GM12878 (cell line): ENCODE measurements at regions of chr13 and their contacts with region 1.

Region 1: GRCh38 chr13:33110713-33111413 is 94.6 kb downstream of the KL start:
- DNase-seq: no peak
- ATAC-seq: peak; percentile 63
- H3K4me3 ChIP-seq: no peak overlapping the region
- H3K27ac ChIP-seq: peak overlapping the region; percentile 91
- H3K4me1 ChIP-seq: peaks cover 54% of the 10 kb centered on the region
- H3K27me3 ChIP-seq: no peaks in the 10 kb centered on the region
- CTCF ChIP-seq: no peak
- EP300 ChIP-seq: peak; percentile 30 to 35; a peak in 2 of 4 replicates
- POLR2A ChIP-seq: 0 out of 2 replicates have a peak, but pooled peaks have one; percentile 17
- RAD21 ChIP-seq: peak; percentile 24; the same call in 1 of the 2 replicates

Region 2: DNA sequence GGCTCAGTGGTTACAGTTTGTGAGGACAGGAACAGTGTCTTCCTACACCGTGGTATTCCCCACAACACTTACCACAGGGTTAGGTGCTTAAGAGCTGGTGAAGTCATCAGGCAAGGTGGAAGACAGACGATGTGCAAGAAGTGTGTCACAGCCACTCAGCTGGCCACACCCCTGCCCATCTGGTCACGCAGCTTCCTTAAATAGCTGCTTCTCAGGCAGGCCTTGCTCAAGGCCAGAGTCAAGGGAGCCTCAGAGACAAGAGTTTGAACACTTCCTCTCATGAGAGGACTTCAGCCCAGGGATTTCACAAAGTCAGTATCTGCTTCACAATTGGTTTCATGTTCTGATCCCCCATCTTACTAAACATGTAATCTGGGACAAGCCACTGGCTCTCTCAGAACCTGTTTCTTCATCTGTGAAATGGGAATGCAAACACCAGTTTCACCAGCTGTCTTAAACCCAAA is 1159.6 kb before region 1 on chr13:
- CTCF ChIA-PET with region 1: no interaction called
- POLR2A ChIA-PET with region 1: no interaction called
- RAD21 ChIA-PET with region 1: no interaction called
- SMC1A ChIA-PET with region 1: no interaction called
- in situ Hi-C with region 1: no loop called
- intact Hi-C with region 1: no loop called
- DNase-seq: peak; percentile 89
- ATAC-seq: peak; percentile 96
- H3K4me3 ChIP-seq: no peak overlapping the region; the same call in 1 of the 2 replicates
- H3K27ac ChIP-seq: peak overlapping the region; percentile 63
- H3K4me1 ChIP-seq: peaks cover 22% of the 10 kb centered on the region
- H3K27me3 ChIP-seq: no peaks in the 10 kb centered on the region
- CTCF ChIP-seq: no peak
- EP300 ChIP-seq: peak; percentile 92 to 93; a peak in 2 of 4 replicates
- POLR2A ChIP-seq: peak; percentile 63
- RAD21 ChIP-seq: no peak

Region 3: GRCh38 chr13:32811297-32811800 is 299.5 kb before region 1 on chr13:
- CTCF ChIA-PET with region 1: no interaction called
- POLR2A ChIA-PET with region 1: no interaction called
- RAD21 ChIA-PET with region 1: no interaction called
- SMC1A ChIA-PET with region 1: no interaction called
- in situ Hi-C with region 1: no loop called
- intact Hi-C with region 1: no loop called
- DNase-seq: peak; percentile 62
- ATAC-seq: peak; percentile 95
- H3K4me3 ChIP-seq: no peak overlapping the region
- H3K27ac ChIP-seq: peak overlapping the region; percentile 62
- H3K4me1 ChIP-seq: peaks cover 14% of the 10 kb centered on the region
- H3K27me3 ChIP-seq: no peaks in the 10 kb centered on the region
- CTCF ChIP-seq: no peak
- EP300 ChIP-seq: peak in 1 of 2 experiments; percentile 43; a peak in 1 of 4 replicates
- POLR2A ChIP-seq: peak; percentile 61
- RAD21 ChIP-seq: no peak

Region 4: DNA sequence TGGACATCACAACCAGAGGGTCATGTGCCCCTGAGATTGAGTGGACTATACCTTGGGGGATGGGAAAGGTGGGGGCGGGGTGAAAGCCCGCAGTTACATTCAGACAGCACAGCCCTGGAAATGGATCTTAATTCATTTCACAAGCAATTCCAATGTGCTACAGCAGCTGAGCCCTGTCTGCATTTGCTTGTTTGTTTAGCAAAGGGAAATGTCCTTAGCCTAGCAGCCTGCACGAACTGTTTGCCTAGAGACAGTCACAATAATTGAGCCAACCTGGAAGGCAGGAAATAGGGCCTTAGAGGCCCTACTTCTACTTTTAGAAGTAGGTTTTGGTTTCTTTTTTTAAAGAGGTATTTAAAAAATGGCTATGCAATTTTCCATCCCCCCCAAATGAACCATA is 271.9 kb before region 1 on chr13:
- CTCF ChIA-PET with region 1: no interaction called
- POLR2A ChIA-PET with region 1: no interaction called
- RAD21 ChIA-PET with region 1: no interaction called
- SMC1A ChIA-PET with region 1: no interaction called
- in situ Hi-C with region 1: no loop called
- intact Hi-C with region 1: loop called (anchors 10 kb)
- DNase-seq: no peak
- ATAC-seq: peak; percentile 83
- H3K4me3 ChIP-seq: peak overlapping the region; percentile 14; the same call in 1 of the 2 replicates
- H3K27ac ChIP-seq: peak overlapping the region; percentile 84
- H3K4me1 ChIP-seq: peaks cover 40% of the 10 kb centered on the region
- H3K27me3 ChIP-seq: no peaks in the 10 kb centered on the region
- CTCF ChIP-seq: no peak
- EP300 ChIP-seq: peak; percentile 40 to 71; a peak in 1 of 4 replicates
- POLR2A ChIP-seq: no peak
- RAD21 ChIP-seq: 0 out of 2 replicates have a peak, but pooled peaks have one; percentile 8

Region 5: DNA sequence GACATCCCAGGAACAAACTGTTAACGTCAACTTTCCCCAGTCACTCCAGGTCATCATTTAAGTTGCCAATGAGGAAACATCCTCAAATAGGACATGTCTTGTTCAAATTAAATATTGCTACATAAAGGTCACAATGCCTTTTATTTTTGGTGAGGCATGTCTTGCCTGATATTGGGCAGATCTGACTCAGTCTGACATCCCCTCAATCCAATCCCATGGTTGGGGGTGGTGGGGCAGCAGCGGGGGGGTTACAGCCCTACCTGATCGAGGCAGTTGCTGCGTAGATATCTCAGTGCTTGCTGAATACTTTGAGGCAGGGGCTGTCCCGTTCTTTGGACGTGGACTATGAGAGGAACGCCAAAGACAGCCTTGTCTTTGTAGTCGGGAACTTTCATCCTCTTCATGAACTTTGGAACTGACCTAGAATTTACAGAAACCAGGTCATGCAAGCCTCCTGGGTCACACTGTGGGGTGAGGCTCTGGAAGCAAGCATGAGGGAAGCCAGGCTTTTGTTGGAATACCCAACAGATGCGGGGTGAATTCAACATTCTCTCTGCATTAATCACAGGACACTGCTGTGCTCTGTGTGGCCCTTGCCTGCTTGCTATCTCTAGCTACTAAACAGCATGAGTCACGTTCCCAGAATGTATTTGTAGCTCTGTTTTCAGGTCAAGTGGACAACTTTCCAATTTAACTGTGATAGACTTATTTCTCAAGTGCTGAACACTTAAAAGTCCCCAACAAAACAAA is 15.1 kb after region 1 on chr13:
- CTCF ChIA-PET with region 1: interaction called, 35 read pairs
- POLR2A ChIA-PET with region 1: interaction called, 10 read pairs
- RAD21 ChIA-PET with region 1: interaction called, 6 read pairs
- SMC1A ChIA-PET with region 1: interaction called, 35 read pairs
- in situ Hi-C with region 1: no loop called
- intact Hi-C with region 1: no loop called
- DNase-seq: no peak
- ATAC-seq: no peak
- H3K4me3 ChIP-seq: no peak overlapping the region
- H3K27ac ChIP-seq: no peak overlapping the region
- H3K4me1 ChIP-seq: no peaks in the 10 kb centered on the region
- H3K27me3 ChIP-seq: no peaks in the 10 kb centered on the region
- CTCF ChIP-seq: no peak
- EP300 ChIP-seq: no peak
- POLR2A ChIP-seq: no peak
- RAD21 ChIP-seq: no peak

Region 6: GRCh38 chr13:33139184-33139583 is 28.3 kb after region 1 on chr13:
- CTCF ChIA-PET with region 1: interaction called, 35 read pairs
- POLR2A ChIA-PET with region 1: interaction called, 62 read pairs
- RAD21 ChIA-PET with region 1: interaction called, 80 read pairs
- SMC1A ChIA-PET with region 1: interaction called, 95 read pairs
- in situ Hi-C with region 1: no loop called
- intact Hi-C with region 1: no loop called
- DNase-seq: no peak
- ATAC-seq: no peak
- H3K4me3 ChIP-seq: no peak overlapping the region
- H3K27ac ChIP-seq: no peak overlapping the region
- H3K4me1 ChIP-seq: no peaks in the 10 kb centered on the region
- H3K27me3 ChIP-seq: no peaks in the 10 kb centered on the region
- CTCF ChIP-seq: no peak
- EP300 ChIP-seq: no peak
- POLR2A ChIP-seq: no peak
- RAD21 ChIP-seq: no peak

Region 7: GRCh38 chr13:33153421-33154404 is 42.9 kb after region 1 on chr13:
- CTCF ChIA-PET with region 1: interaction called, 31 read pairs
- POLR2A ChIA-PET with region 1: interaction called, 62 read pairs
- RAD21 ChIA-PET with region 1: interaction called, 34 read pairs
- SMC1A ChIA-PET with region 1: interaction called, 95 read pairs
- in situ Hi-C with region 1: no loop called
- intact Hi-C with region 1: no loop called
- DNase-seq: no peak
- ATAC-seq: peak; percentile 53
- H3K4me3 ChIP-seq: no peak overlapping the region
- H3K27ac ChIP-seq: no peak overlapping the region
- H3K4me1 ChIP-seq: peaks cover 26% of the 10 kb centered on the region
- H3K27me3 ChIP-seq: no peaks in the 10 kb centered on the region
- CTCF ChIP-seq: peak in 2 of 3 experiments; percentile 25 to 49; a peak in 3 of 6 replicates
- EP300 ChIP-seq: no peak
- POLR2A ChIP-seq: no peak
- RAD21 ChIP-seq: peak; percentile 39; the same call in 1 of the 2 replicates

Region 8: GRCh38 chr13:33194820-33195692 is 84.2 kb after region 1 on chr13:
- CTCF ChIA-PET with region 1: interaction called, 25 read pairs
- POLR2A ChIA-PET with region 1: interaction called, 9 read pairs
- RAD21 ChIA-PET with region 1: interaction called, 61 read pairs
- SMC1A ChIA-PET with region 1: interaction called, 80 read pairs
- in situ Hi-C with region 1: no loop called
- intact Hi-C with region 1: loop called (anchors 2 kb)
- DNase-seq: peak; percentile 99
- ATAC-seq: peak; percentile 71
- H3K4me3 ChIP-seq: peak overlapping the region; percentile 54
- H3K27ac ChIP-seq: peak overlapping the region; percentile 92
- H3K4me1 ChIP-seq: peaks cover 29% of the 10 kb centered on the region
- H3K27me3 ChIP-seq: no peaks in the 10 kb centered on the region
- CTCF ChIP-seq: no peak
- EP300 ChIP-seq: peak; percentile 71 to 95
- POLR2A ChIP-seq: no peak
- RAD21 ChIP-seq: 0 out of 2 replicates have a peak, but pooled peaks have one; percentile 24

Region 9: DNA sequence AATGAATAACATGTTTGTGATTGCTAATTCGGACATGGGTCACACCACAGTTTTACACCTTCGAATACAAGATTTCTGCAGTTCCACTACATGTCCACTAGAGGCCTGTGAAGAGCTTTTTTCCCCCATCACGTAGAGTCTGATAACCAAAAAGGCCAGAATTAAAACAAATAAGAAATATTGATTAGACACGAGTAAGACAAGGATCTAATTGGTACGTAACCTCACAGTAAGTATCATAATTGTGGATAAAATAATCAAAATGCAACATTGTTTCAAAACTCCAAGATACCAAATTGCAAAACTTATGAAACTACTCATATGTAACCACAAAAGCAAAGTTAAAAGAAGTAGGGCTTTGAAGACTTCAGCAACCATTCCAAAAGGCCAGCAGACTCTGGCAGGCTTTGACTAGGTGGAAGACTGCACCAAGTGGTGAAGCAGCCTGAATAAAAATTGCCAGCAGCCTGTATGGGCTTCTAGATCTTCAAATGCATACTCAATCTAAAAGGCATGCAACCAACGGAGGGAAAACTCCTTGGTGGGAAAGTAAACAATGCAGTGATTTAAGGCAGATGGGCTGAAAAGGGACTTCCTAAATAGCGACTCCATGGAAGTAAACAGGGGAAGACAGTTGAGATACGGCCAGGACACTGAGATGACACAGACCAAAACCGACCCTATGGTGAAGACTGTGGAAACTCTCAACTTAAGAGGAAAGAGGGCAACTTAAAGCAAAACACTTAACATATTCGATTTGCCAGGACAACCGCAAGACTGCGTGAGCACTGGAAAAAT is 118.0 kb after region 1 on chr13:
- CTCF ChIA-PET with region 1: interaction called, 13 read pairs
- POLR2A ChIA-PET with region 1: no interaction called
- RAD21 ChIA-PET with region 1: interaction called, 7 read pairs
- SMC1A ChIA-PET with region 1: interaction called, 14 read pairs
- in situ Hi-C with region 1: no loop called
- intact Hi-C with region 1: no loop called
- DNase-seq: no peak
- ATAC-seq: peak; percentile 94
- H3K4me3 ChIP-seq: no peak overlapping the region
- H3K27ac ChIP-seq: no peak overlapping the region
- H3K4me1 ChIP-seq: no peaks in the 10 kb centered on the region
- H3K27me3 ChIP-seq: no peaks in the 10 kb centered on the region
- CTCF ChIP-seq: peak; percentile 83 to 98 (median 94)
- EP300 ChIP-seq: no peak
- POLR2A ChIP-seq: no peak
- RAD21 ChIP-seq: peak; percentile 98